ENCODE measurements at regions of chr4 and their contacts with region 1.

Region 1: DNA sequence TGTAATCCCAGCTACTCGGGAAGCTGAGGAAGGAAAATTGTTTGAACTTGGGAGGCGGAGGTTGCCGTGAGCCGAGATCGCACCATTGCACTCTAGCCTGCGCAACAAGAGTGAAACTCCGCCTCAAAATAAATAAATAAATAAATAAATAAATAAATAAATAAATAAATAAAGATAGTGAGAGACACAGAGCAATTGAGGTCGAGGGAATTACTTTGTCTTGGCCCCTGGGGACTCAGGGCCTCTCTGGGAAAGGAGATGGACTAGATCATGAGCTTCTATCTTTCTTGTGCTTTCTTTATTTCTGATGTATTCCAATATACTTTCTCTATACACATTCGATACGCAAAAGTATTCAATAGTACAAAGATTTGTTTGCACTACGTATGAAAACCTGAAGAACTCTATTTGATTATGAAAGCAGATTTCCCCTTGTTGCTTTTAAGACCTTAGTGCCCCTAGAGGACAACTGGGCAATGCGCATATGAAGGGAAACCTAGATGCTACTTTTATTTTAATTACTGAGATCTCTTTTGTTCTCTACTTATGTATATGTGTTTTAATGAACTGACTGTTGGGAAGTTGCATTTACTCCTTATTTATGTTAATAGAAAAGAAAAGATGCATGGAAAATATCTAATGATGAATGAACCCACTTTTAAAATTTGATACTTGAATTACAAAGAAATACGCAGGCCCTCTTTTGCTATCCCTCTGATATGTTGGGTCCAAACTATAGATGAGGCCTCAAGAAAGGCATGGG is 12.8 kb upstream of the ELOVL6 start:
- DNase-seq: peak in 1 of 2 donors; percentile 73
- ATAC-seq: peak; percentile 70 to 93 (median 85)
- H3K4me3 ChIP-seq: no peak overlapping the region
- H3K4me3 Mint-ChIP-seq: peak overlapping the region; percentile 55
- H3K27ac ChIP-seq: no peak overlapping the region
- H3K27ac Mint-ChIP-seq: peak overlapping the region in 1 of 2 donors; percentile 15
- H3K4me1 ChIP-seq: no peaks in the 10 kb centered on the region
- H3K4me1 Mint-ChIP-seq: peaks cover 0 to 5% of the 10 kb centered on the region in 2 donors
- H3K27me3 ChIP-seq: no peaks in the 10 kb centered on the region
- H3K27me3 Mint-ChIP-seq: no peaks in the 10 kb centered on the region
- CTCF ChIP-seq: peak; percentile 84

Region 2: GRCh38 chr4:110005461-110006056 is 205.6 kb before region 1 on chr4:
- intact Hi-C with region 1: loop called (anchors 1 kb)
- DNase-seq: peak in 1 of 2 donors; percentile 80
- ATAC-seq: peak; percentile 75 to 92 (median 90)
- H3K4me3 ChIP-seq: no peak overlapping the region
- H3K4me3 Mint-ChIP-seq: no peak overlapping the region
- H3K27ac ChIP-seq: no peak overlapping the region
- H3K27ac Mint-ChIP-seq: peak overlapping the region in 1 of 2 donors; percentile 36
- H3K4me1 ChIP-seq: no peaks in the 10 kb centered on the region
- H3K4me1 Mint-ChIP-seq: no peaks in the 10 kb centered on the region
- H3K27me3 ChIP-seq: no peaks in the 10 kb centered on the region
- H3K27me3 Mint-ChIP-seq: peaks cover 0 to 3% of the 10 kb centered on the region in 2 donors
- CTCF ChIP-seq: peak; percentile 83

Region 3: DNA sequence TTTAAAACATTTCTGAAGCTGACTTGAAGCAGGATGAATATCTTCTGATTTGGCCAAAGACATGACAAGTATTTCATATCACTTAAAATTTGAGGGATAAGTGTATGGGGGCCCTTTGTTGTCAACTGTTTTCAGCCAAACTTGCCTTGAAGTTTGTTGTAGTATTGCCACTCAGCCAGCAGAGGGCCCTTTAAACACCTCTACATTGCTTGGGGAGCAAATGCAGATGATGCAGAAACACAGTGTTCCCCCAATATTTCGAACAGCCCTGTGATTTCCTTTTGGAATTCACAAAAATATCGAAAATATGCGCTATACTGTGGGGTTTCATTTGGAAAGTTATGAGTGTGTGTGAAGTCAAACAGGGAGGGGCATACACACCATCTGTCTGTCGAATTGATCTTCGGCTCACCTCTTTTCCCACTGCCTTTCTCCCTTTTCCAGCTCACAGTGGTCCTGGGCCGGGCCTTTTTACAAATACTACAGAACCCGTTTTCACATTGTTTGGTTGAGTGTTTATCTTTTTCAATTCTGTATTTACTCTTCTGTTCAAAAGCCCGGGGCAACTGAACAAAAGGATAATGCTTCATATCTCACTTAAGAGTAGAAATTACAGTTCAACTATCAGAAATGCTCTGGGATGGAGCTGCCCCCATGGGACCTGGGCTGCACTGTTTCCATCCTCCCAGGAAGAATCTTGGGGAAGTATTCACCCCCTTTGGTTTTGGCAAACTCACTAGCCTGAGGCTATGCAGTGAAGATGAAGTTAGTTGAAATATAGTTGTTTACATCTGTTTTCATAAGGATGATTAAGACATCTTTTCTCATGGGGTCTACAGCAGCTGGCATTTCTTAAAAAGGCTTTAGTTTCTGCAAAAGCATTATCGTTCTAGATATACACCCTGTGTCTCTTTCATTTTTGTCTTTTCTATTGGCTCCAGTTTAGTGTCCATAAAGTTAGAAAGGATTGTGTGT is 160.9 kb before region 1 on chr4:
- intact Hi-C with region 1: loop called (anchors 1 kb)
- DNase-seq: peak; percentile 32 to 75
- ATAC-seq: peak; percentile 68 to 95 (median 76)
- H3K4me3 ChIP-seq: no peak overlapping the region
- H3K4me3 Mint-ChIP-seq: no peak overlapping the region
- H3K27ac ChIP-seq: no peak overlapping the region
- H3K27ac Mint-ChIP-seq: peak overlapping the region; percentile 68 to 79
- H3K4me1 ChIP-seq: peaks cover 5% of the 10 kb centered on the region
- H3K4me1 Mint-ChIP-seq: peaks cover 28 to 30% of the 10 kb centered on the region in 2 donors
- H3K27me3 ChIP-seq: no peaks in the 10 kb centered on the region
- H3K27me3 Mint-ChIP-seq: no peaks in the 10 kb centered on the region
- CTCF ChIP-seq: peak; percentile 82

Region 4: GRCh38 chr4:110484740-110485139 is 273.6 kb after region 1 on chr4:
- intact Hi-C with region 1: no loop called
- DNase-seq: no peak
- ATAC-seq: no peak
- H3K4me3 ChIP-seq: no peak overlapping the region
- H3K4me3 Mint-ChIP-seq: no peak overlapping the region
- H3K27ac ChIP-seq: no peak overlapping the region
- H3K27ac Mint-ChIP-seq: no peak overlapping the region
- H3K4me1 ChIP-seq: no peaks in the 10 kb centered on the region
- H3K4me1 Mint-ChIP-seq: no peaks in the 10 kb centered on the region
- H3K27me3 ChIP-seq: peaks cover 2% of the 10 kb centered on the region
- H3K27me3 Mint-ChIP-seq: peaks cover 12 to 32% of the 10 kb centered on the region in 2 donors
- CTCF ChIP-seq: no peak